ENCODE measurements at regions of chr2 and their contacts with region 1.

Region 1: GRCh38 chr2:74919827-74920226 is 38.6 kb upstream of the POLE4 start:
- DNase-seq: peak; percentile 79
- ATAC-seq: peak; percentile 88
- H3K4me3 ChIP-seq: peak overlapping the region in 1 of 5 experiments; percentile 21
- H3K4me3 Mint-ChIP-seq: peak overlapping the region; percentile 68
- H3K27ac ChIP-seq: no peak overlapping the region
- H3K27ac Mint-ChIP-seq: peak overlapping the region; percentile 15
- H3K4me1 ChIP-seq: peaks cover 3 to 7% of the 10 kb centered on the region in 2 donors
- H3K4me1 Mint-ChIP-seq: peaks cover 27% of the 10 kb centered on the region
- H3K27me3 ChIP-seq: peaks cover 0 to 6% (median 0%) of the 10 kb centered on the region in 4 experiments
- H3K27me3 Mint-ChIP-seq: peaks cover 18% of the 10 kb centered on the region
- CTCF ChIP-seq: peak; percentile 96

Region 2: DNA sequence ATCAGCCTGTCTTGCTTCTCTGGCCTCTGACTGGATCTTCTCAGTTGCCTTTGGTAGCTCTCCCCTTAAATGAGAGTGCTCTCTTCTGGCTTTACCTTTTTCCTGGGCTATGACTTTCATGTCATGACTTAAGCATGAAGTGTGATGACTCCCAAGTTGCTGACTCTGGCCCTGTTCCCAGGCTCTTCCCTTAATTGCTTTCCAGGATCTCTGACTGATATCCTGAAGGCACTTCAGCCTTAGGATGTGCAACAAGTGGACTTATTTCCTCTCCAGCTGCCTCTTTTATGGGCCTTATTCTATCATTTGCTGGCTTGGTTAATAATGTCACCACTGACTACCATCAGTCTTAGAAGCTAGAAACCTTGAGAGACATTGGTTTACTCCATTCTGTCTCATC is 248.3 kb before region 1 on chr2:
- CTCF ChIA-PET with region 1: no interaction called
- POLR2A ChIA-PET with region 1: no interaction called
- intact Hi-C with region 1: no loop called
- DNase-seq: no peak
- ATAC-seq: no peak
- H3K4me3 ChIP-seq: no peak overlapping the region
- H3K4me3 Mint-ChIP-seq: no peak overlapping the region
- H3K27ac ChIP-seq: no peak overlapping the region
- H3K27ac Mint-ChIP-seq: no peak overlapping the region
- H3K4me1 ChIP-seq: no peaks in the 10 kb centered on the region
- H3K4me1 Mint-ChIP-seq: no peaks in the 10 kb centered on the region
- H3K27me3 ChIP-seq: no peaks in the 10 kb centered on the region
- H3K27me3 Mint-ChIP-seq: no peaks in the 10 kb centered on the region
- CTCF ChIP-seq: no peak

Region 3: GRCh38 chr2:74966887-74967286 is 47.1 kb after region 1 on chr2:
- CTCF ChIA-PET with region 1: no interaction called
- POLR2A ChIA-PET with region 1: no interaction called
- intact Hi-C with region 1: no loop called
- DNase-seq: no peak
- ATAC-seq: no peak
- H3K4me3 ChIP-seq: no peak overlapping the region
- H3K4me3 Mint-ChIP-seq: no peak overlapping the region
- H3K27ac ChIP-seq: no peak overlapping the region
- H3K27ac Mint-ChIP-seq: no peak overlapping the region
- H3K4me1 ChIP-seq: no peaks in the 10 kb centered on the region
- H3K4me1 Mint-ChIP-seq: peaks cover 12% of the 10 kb centered on the region
- H3K27me3 ChIP-seq: no peaks in the 10 kb centered on the region
- H3K27me3 Mint-ChIP-seq: no peaks in the 10 kb centered on the region
- CTCF ChIP-seq: no peak

Region 4: GRCh38 chr2:75199428-75200011 is 279.7 kb after region 1 on chr2 and contains the start of gene TACR1:
- CTCF ChIA-PET with region 1: interaction called, 14 read pairs
- POLR2A ChIA-PET with region 1: no interaction called
- intact Hi-C with region 1: loop called (anchors 10 kb)
- DNase-seq: peak; percentile 70
- ATAC-seq: peak; percentile 71
- H3K4me3 ChIP-seq: peak within 1 kb of the TSS in 4 of 5 experiments; percentile 9 to 49 (median 36)
- H3K4me3 Mint-ChIP-seq: peak within 1 kb of the TSS; percentile 91
- H3K27ac ChIP-seq: no peak within 1 kb of the TSS
- H3K27ac Mint-ChIP-seq: no peak within 1 kb of the TSS
- H3K4me1 ChIP-seq: peaks cover 22 to 23% of the 10 kb centered on the region in 2 donors
- H3K4me1 Mint-ChIP-seq: peaks cover 23% of the 10 kb centered on the region
- H3K27me3 ChIP-seq: peaks cover 0 to 41% (median 31%) of the 10 kb centered on the region in 4 experiments
- H3K27me3 Mint-ChIP-seq: peaks cover 57% of the 10 kb centered on the region
- CTCF ChIP-seq: peak; percentile 65
- total RNA-seq, gene TACR1: 0.05 TPM in 1 of 2 replicates, not detected in the other

Measured in B cell (primary cell).